Right ventricle myocardium inferior (tissue), 1 donor: ENCODE measurements at regions of chr3 and their contacts with region 1.

Region 1: DNA sequence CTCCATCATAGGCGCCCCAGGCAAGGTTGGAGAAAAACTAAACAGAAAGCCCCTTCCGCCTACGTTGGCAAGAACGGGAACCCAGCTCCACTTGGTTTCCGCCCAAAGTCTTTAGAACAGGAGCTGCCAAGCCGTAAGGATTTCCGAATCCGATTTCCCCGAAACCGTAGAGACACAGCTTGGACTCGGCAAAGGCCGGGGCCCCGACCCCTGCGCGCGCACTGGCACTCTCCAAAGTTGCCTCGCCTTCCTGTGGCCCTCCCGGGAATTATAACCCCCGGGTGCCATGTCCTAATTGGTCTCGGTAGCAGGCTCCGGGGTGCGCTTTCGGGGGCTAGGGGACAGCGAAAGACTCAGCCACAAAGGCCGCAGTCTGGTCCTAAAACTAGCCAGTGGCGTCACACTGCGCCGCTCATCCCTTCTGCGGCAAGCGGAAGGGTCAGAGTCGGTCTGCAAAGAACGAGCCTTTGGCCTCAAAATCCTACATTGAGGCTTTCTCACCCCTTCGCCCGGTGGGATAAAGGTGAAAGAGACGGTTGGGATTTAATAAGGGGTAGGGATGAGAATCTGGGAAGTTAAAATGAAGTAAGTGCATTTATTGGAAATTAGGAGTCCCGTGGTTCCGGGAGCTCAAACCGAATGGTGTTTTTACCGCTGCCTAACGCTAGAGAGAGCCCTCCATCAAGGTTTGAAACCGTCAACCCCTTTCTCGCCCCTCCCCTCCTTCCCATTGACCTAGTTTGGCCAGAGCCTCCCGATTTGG is 6.8 kb downstream of the BCL6 start:
- DNase-seq: peak; percentile 82
- ATAC-seq: peak; percentile 71

Region 2: DNA sequence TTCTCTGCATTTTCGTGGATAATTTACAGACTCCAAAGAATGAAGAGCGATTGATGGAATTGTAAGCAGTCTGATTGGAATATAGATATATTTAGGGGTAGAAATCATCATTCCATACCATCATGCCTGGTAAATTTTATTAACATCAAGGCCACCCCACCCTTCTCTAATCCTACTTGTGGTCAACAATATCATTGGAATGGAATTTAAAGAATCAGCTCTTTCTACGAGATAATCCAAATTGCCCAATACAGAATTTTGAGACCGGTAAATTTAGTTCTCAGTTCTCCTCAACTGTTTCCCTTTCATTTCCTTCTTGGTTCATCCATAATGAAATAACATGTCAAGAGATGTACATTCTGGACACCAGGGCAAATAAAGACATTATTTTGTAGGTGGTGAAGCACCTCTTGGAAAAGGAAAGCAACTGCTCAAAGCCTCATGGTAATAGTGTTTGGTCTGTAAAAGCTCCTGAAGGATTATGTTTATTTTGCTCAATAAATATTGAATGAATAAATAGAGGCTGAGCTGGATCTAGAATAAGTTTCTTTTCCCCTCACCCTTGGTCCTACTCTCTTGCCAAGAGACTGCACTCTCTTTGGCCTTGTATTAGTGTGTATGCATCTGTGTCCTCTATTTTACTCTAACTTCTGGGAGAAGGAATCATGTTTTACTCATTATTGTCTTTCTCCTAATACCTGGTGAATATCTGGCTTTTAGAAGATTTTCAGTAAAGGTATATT is 140.4 kb after region 1 on chr3:
- intact Hi-C with region 1: no loop called
- DNase-seq: no peak
- ATAC-seq: no peak

Region 3: DNA sequence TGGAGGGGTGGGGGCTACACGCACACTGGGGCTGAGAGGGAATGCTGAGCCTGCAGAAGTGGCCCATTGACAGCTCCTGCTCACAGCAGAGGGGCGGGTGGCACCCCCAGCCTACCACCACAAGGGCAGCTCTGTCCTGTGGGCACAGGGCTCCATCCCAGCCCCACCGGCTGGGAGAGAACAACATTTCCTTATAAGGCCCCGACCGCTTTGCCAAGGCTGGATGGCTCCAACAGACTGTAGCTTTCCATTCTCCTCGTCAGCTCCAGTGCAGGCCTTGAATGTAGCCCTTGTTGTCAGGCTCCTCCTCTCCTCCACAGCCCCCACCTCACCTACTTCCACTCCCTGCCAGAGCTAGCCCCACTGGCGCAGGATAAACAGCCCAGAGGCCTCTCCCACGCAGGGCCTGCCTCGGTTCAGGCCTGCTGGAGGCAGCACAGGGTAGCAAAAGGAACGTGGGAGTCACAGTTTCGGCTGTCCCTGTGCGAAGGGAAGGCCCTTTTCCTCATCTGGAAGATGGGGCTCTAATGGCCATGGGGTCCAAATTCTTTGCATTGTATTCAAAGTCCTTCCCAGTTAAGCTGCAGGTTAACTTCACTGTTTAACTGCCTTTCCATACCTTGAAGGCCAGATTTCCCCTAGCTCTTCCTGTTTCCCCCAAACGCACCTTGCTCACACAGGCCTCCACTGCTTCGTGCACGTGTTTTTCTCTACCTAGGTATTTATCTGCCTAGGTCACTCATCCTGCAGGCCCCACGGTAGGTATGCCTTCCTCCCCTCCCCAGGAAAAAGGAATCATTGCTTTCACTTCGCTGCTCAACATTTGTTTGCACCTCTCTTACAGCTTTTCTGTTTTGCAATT is 313.9 kb after region 1 on chr3:
- intact Hi-C with region 1: loop called (anchors 5 kb)
- DNase-seq: peak; percentile 90
- ATAC-seq: peak; percentile 98

Region 4: DNA sequence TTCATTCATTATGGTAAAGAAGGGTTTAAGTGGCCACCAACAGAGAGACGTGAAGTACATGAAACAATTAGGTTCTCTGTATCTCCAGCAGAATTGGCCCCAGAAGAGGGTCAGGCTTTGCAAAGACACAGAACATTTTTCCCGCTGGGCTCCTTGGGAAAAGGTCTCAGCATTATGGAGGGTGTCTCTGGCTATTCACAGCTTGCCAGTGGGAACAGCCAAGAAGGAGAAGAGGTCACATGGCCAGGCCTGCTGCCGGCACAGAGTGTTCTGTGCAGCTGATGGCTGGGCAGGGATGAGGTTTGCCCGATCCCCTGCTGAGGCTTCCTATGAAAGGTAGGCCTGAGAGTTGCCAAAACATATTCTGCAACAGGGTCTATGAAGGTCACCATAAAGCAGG is 337.7 kb after region 1 on chr3:
- intact Hi-C with region 1: no loop called
- DNase-seq: peak; percentile 61
- ATAC-seq: peak; percentile 72

Region 5: DNA sequence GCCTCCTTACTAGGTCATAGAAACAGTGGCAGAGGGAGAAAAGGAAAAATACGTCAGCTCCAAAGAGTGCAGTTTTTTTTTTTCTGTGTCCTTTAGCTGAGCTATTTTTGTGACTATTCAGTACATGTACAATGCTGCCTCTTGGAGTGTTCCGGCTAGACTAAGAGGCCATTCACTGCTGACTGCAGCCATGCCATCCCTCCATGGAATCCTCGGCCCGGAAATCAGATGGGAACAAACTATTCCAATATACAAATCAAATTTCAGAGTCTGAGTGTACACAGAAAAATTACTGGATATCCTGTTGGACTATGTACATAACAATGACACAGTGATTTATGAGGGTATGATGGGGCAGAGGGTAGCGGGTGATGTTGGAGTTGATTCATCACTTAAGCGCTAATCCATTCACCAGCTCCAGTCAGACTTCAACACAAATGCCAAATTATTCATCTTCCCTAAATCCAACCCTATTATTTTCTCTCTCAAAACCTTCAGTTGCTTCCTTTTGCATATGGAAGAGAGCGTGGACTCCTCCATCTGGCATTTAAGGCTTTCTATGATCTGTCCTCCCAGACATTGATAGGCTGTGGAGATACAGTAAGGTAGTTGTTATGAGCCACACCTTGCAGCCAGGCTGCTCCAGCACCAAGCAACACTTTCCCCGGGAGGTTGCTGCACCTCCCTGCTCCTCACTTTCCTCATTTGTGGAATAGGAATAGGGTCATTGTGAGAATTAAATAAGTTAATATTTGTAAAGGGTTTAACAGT is 524.6 kb after region 1 on chr3:
- intact Hi-C with region 1: loop called (anchors 5 kb)
- DNase-seq: no peak
- ATAC-seq: peak; percentile 65

Region 6: DNA sequence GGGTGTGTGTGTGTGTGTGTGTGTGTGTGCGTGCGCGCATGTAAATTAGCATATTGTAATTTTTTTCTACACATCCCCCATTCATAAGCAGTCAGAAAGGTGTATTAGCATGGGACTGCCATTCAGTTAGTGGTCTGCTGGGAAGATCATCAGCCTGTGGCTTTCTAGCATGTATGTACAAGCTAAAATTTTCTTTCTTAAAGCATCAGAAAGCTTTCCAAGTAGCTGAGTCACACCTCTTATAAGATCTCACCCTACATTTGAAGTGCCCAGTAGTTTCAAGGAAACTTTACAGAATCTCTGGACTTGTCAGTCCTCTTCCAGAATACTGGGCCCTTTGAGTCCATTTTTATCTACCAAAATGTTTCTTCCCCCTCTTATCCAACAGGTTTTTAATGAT is 1021.9 kb after region 1 on chr3:
- intact Hi-C with region 1: loop called (anchors 10 kb)
- DNase-seq: no peak
- ATAC-seq: no peak

Region 7: DNA sequence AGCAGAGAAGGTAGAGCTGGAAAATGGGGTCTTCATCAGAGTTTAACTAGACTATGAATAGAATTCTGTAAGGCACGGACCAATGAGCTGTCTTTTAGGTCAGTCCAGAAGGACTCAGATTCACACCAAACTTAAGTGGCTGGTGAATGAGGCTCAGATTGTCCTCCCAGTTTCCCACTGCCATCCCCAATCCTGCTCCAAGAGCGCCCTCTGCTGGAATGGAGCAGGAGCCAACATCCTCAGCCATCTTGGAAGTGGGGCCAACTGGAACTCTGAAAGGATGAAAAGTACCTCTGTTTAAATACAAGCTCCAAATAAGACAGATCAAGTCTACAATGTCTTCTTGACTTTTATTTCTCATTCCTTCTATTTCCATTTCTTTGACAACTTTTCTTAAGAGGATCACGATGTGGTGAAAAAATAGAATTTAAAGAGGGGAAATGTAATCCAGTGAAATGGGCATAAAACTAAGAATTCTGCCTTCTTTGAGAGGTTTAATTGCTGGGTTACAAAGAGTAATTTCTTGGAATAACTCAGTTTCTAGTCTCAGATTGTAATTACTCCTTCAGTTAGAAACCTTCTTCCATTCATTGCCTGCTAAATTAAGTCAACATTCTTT is 1216.2 kb after region 1 on chr3:
- intact Hi-C with region 1: loop called (anchors 1 kb)
- DNase-seq: peak; percentile 82
- ATAC-seq: peak; percentile 82